ENCODE measurements at regions of chr4 and their contacts with region 1.

Region 1: DNA sequence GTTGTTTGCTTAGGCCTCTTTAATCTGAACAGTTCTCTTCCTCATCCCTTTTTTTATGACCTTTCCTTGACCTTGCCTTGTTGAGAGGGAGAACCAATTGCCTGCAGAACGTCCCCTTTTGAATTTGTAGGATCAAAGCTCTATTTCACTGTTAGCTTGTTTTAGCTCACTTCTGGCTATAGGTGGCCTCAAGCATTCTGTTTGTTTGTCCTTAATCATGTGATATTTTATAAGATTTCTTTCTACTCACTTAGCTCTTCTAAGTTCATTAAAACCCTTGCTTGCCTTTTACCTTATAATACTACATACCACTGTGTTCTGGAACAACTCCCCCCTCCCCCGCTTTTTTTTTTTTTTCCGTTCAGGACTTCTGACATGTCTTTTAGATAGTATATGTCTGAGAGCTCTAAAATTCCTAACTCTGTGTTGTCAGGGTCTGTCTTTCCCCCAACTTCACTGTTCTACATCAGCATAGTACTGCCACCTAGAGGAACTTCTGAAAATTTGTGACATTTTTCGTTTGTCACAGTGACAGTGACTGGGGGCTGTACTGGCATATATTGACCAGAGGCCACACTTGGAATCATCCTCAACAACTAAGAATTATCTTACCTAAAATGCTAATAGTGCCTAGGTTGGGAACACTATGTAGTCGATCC is 128.5 kb downstream of the LARP7 start:
- DNase-seq: no peak
- H3K4me3 Mint-ChIP-seq: no peak overlapping the region
- H3K27ac Mint-ChIP-seq: no peak overlapping the region
- H3K4me1 Mint-ChIP-seq: no peaks in the 10 kb centered on the region
- H3K27me3 Mint-ChIP-seq: peaks cover 3% of the 10 kb centered on the region

Region 2: GRCh38 chr4:112099701-112100297 is 665.6 kb before region 1 on chr4:
- CTCF ChIA-PET with region 1: interaction called, 4 read pairs
- POLR2A ChIA-PET with region 1: no interaction called
- intact Hi-C with region 1: loop called (anchors 10 kb)
- DNase-seq: no peak
- H3K4me3 Mint-ChIP-seq: no peak overlapping the region
- H3K27ac Mint-ChIP-seq: no peak overlapping the region
- H3K4me1 Mint-ChIP-seq: peaks cover 1% of the 10 kb centered on the region
- H3K27me3 Mint-ChIP-seq: peaks cover 2% of the 10 kb centered on the region

Region 3: DNA sequence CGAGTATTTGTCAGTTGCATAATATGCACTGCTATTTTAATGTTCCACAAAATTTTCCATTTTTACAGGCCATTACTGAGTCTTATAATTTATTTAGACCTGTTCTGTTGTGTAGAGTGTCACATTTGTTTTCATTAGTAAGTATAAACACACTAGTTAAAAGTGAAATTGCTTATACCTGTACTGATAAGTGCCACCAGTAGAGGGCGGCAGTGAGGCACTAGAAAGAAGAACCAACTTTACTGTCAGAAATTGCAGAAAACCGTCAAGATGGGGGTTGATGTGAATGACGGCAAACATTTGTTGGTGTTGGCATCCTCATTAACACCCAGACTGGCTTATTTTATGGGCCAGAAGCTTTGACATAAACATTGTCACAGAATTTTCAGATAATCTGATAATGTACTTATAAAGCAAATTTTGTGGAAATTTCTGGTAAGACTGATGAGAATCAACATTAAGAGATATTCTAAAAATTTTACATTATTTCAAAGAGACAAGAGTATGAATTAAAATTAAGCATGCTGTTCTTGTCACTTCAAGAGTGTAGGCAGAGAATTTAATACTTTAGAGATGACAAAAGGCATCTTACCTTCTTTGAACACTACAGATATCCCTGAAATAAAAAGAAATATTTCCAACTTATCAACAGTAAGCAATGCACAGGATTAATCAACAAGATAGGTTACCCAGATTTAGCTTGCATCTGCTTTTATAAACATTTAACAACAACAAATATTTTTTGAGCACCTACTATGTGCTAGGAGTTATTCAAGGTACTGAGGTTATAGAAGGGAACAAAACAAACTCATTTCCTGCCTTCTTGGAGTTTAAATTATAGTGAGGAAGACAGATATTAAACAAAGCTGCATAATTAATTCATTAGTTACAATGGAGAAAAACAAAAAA is 443.4 kb before region 1 on chr4:
- CTCF ChIA-PET with region 1: interaction called, 7 read pairs
- POLR2A ChIA-PET with region 1: no interaction called
- intact Hi-C with region 1: loop called (anchors 5 kb)
- DNase-seq: peak; percentile 82
- H3K4me3 Mint-ChIP-seq: no peak overlapping the region
- H3K27ac Mint-ChIP-seq: no peak overlapping the region
- H3K4me1 Mint-ChIP-seq: peaks cover 22% of the 10 kb centered on the region
- H3K27me3 Mint-ChIP-seq: no peaks in the 10 kb centered on the region

Region 4: DNA sequence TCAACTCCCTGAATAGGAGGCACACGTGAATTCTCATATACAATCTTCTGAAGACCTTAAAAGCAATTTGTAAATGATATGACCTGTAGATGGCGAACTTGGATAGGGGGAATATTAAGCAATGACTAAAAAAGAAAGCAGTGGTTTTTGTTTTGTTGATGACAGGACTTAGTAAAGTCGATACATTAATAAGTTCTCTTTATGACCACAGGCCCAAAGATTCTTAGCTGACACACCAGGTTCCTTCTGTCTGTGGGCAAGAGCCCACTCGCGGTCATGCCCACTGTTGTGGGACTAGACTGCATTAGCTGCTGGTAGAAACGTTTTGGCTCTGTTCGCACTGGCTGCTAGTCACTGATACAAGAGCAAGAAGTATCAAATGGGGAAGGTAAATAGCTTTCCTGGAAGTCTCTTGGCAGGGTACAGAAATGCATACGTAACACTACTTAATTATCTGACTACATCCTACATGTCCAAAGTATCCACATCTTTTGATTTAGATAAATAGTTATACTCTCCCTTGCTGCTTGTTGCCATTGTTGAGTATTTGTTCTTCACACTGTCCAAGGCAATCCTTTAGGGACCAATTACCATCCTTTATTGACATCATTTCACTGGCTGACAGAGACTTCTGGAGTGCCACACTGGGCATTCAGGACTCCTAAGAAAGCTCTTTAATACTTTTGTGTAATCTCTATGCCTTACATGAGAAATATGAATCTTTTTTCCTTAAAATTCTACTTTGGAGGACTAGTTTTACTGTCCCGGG is 437.3 kb before region 1 on chr4:
- CTCF ChIA-PET with region 1: interaction called, 11 read pairs
- POLR2A ChIA-PET with region 1: no interaction called
- intact Hi-C with region 1: loop called (anchors 5 kb)
- DNase-seq: peak; percentile 24
- H3K4me3 Mint-ChIP-seq: no peak overlapping the region
- H3K27ac Mint-ChIP-seq: no peak overlapping the region
- H3K4me1 Mint-ChIP-seq: peaks cover 5% of the 10 kb centered on the region
- H3K27me3 Mint-ChIP-seq: no peaks in the 10 kb centered on the region

Region 5: DNA sequence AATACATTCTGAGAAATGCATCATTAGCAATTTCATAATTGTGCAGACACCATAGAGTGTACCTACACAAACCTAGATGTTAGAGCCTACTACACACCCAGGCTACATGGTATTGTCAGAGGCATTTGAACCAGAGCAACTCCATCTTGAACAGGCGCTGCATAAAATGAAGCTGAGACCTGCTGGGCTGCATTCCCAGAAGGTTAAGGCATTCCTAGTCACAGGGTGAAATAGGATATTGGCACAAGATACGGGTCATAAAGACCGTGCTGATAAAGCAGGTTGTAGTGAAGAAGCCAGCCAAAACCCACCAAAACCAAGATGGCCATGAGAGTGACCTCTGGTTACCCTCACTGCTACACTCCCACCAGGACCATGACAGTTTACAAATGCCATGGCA is 12.1 kb before region 1 on chr4:
- CTCF ChIA-PET with region 1: interaction called, 11 read pairs
- POLR2A ChIA-PET with region 1: interaction called, 3 read pairs
- intact Hi-C with region 1: no loop called
- DNase-seq: no peak
- H3K4me3 Mint-ChIP-seq: no peak overlapping the region
- H3K27ac Mint-ChIP-seq: no peak overlapping the region
- H3K4me1 Mint-ChIP-seq: no peaks in the 10 kb centered on the region
- H3K27me3 Mint-ChIP-seq: peaks cover 5% of the 10 kb centered on the region

Region 6: DNA sequence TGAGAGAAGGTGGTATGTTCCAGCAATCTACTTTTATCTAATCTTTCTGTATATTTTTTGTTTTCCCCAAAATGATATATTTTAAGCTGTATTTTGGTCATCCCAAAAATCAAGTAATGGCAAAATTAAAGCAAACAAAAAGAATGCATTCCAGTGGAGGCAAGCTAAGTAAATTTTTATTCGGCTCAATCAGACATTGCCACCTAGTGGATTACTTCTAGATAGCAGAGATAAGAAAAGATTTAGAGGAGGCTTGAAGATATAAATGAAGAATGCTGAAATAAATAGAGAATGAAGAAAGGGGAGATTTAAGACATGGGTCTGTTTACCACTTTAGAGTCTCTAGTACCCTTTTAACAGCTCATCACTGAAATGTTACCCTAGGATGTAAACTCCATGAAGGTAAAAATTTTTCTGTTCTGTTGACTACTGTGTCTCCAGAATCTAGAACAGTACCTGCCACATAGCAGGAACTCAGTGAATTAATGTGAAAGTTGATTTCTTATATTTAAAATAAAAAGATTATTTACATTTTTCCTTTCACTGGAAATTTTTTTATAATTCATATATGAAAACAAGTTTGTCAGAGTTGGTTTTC is 173.1 kb after region 1 on chr4:
- CTCF ChIA-PET with region 1: interaction called, 20 read pairs
- POLR2A ChIA-PET with region 1: no interaction called
- intact Hi-C with region 1: loop called (anchors 1 kb)
- DNase-seq: no peak
- H3K4me3 Mint-ChIP-seq: no peak overlapping the region
- H3K27ac Mint-ChIP-seq: no peak overlapping the region
- H3K4me1 Mint-ChIP-seq: no peaks in the 10 kb centered on the region
- H3K27me3 Mint-ChIP-seq: peaks cover 7% of the 10 kb centered on the region